Lower leg skin (tissue), 4 donors: ENCODE measurements at regions of chr9 and their contacts with region 1.

Region 1: GRCh38 chr9:119956111-119956510 is 586.9 kb upstream of the BRINP1 start:
- DNase-seq: no peak
- H3K4me3 ChIP-seq: no peak overlapping the region
- CTCF ChIP-seq: no peak
- POLR2A ChIP-seq: no peak

Region 2: GRCh38 chr9:119827126-119827525 is 129.0 kb before region 1 on chr9:
- intact Hi-C with region 1: no loop called
- DNase-seq: no peak
- H3K4me3 ChIP-seq: no peak overlapping the region
- CTCF ChIP-seq: no peak
- POLR2A ChIP-seq: no peak

Region 3: GRCh38 chr9:119907056-119907455 is 49.1 kb before region 1 on chr9:
- intact Hi-C with region 1: loop called (anchors 1 kb)
- DNase-seq: no peak
- H3K4me3 ChIP-seq: no peak overlapping the region
- CTCF ChIP-seq: no peak
- POLR2A ChIP-seq: no peak

Region 4: GRCh38 chr9:120175031-120175430 is 218.9 kb after region 1 on chr9:
- intact Hi-C with region 1: no loop called
- DNase-seq: no peak
- H3K4me3 ChIP-seq: no peak overlapping the region
- CTCF ChIP-seq: no peak
- POLR2A ChIP-seq: no peak